ENCODE measurements at regions of chr9 and their contacts with region 1.

Region 1: GRCh38 chr9:83219152-83219923 is 156.4 kb upstream of the RASEF start:
- DNase-seq: peak; percentile 79 to 90 (median 84)
- ATAC-seq: peak; percentile 93 to 97 (median 97)
- H3K4me3 ChIP-seq: peak overlapping the region; percentile 44 to 73 (median 62)
- H3K27ac ChIP-seq: peak overlapping the region; percentile 19 to 82 (median 73)
- H3K4me1 ChIP-seq: peaks cover 0 to 27% (median 18%) of the 10 kb centered on the region in 12 donors
- H3K27me3 ChIP-seq: no peaks in the 10 kb centered on the region
- CTCF ChIP-seq: peak; percentile 47 to 84 (median 68)
- POLR2A ChIP-seq: peak in 1 of 2 donors; percentile 24

Region 2: DNA sequence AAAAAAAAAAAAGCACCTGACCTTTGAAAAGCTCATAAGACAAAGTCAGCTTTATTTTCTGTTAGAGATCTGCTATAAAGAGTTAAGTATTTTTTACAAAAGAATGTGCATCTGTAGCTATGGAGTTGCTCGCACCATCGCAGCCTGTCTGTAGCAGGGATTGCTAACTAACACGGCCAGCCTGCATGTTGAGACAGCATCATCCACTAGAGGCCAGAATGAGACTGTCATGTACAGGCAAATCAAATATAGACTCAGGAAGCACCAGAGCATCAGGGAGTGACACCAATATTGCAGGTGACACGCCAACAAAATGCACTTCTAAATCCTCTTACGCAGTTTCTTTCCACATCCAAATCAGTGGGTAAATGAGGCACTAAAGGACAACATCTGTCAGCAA is 20.1 kb before region 1 on chr9:
- intact Hi-C with region 1: no loop called
- DNase-seq: peak in 4 of 5 donors; percentile 36 to 46 (median 41)
- ATAC-seq: peak; percentile 82 to 97 (median 92)
- H3K4me3 ChIP-seq: no peak overlapping the region
- H3K27ac ChIP-seq: no peak overlapping the region
- H3K4me1 ChIP-seq: peaks cover 0 to 8% (median 0%) of the 10 kb centered on the region in 12 donors
- H3K27me3 ChIP-seq: peaks cover 0 to 9% (median 0%) of the 10 kb centered on the region in 9 donors
- CTCF ChIP-seq: peak; percentile 35 to 80 (median 67)
- POLR2A ChIP-seq: no peak

Region 3: DNA sequence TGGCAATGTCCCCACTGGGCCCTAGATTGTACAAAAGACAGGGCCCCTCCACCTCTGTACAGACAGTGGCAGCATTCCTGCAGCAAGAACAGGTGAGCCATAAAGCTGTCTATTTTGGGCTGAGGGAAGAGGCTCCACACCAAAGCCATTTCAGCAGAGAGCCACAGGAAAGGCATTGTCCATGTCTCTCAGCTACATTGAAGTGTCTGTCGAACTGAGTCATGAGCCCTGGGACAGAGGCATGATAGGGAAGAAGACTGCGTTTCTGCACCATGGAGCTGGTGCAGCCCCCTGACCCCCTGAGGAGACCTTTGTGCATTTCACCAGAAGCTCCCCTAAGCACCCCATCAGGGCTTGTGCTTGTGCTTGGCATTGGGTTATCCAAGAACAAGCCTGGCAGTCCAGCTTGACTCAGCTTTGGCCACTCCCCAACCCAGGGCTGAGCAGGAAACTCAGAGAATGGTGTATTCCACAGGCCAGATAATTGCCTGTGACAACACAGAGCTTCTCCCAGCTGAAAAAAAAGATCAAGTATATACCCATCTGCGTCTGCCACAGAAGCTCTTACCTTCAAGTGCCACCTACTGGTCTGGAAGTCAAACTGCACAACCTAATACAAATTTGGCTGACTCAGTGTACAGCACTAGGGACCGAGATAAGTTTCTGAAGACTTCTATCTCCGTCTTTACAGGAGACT is 324.8 kb after region 1 on chr9:
- intact Hi-C with region 1: loop called in 9 of 10 experiments (anchors 1 to 5 kb)
- DNase-seq: peak in 3 of 5 donors; percentile 35 to 50 (median 43)
- ATAC-seq: peak; percentile 73 to 92 (median 92)
- H3K4me3 ChIP-seq: no peak overlapping the region
- H3K27ac ChIP-seq: peak overlapping the region in 1 of 12 donors; percentile 21
- H3K4me1 ChIP-seq: peaks cover 0 to 12% (median 3%) of the 10 kb centered on the region in 12 donors
- H3K27me3 ChIP-seq: no peaks in the 10 kb centered on the region
- CTCF ChIP-seq: peak; percentile 64 to 86 (median 77)
- POLR2A ChIP-seq: no peak

Region 4: DNA sequence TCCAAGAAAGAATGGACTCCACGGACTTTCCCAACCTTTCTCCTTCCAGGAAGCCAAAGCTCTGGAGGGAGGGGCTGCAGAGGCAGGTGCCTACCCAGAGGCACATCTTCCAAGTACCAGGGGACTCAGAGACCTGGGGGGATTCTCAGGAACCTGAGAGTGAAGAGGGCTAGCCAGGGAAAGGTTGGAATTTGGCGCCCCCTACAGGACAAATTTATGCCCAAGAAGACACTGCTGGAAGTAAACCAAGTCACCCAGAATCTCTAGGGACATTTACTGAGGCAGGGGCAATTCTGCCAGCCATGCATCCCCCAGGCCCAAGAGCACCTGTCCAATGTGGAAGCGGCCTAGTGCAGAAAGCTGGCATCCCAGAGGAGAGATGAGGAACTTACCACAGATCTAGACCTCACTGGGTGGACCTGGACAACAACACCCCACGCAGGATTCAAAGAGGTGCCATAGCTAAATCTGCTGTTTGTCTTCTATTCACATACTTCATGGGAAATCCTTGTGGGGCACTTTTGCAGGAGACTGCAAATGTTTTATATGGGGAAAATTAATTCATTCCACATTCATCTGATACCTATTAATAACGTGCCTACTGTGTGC is 377.7 kb after region 1 on chr9:
- intact Hi-C with region 1: loop called in 2 of 10 experiments (anchors 2 to 5 kb)
- DNase-seq: peak in 2 of 5 donors; percentile 21 to 27
- ATAC-seq: peak in 1 of 4 donors; percentile 49
- H3K4me3 ChIP-seq: no peak overlapping the region
- H3K27ac ChIP-seq: no peak overlapping the region
- H3K4me1 ChIP-seq: no peaks in the 10 kb centered on the region
- H3K27me3 ChIP-seq: no peaks in the 10 kb centered on the region
- CTCF ChIP-seq: peak; percentile 56 to 80 (median 66)
- POLR2A ChIP-seq: no peak

Region 5: DNA sequence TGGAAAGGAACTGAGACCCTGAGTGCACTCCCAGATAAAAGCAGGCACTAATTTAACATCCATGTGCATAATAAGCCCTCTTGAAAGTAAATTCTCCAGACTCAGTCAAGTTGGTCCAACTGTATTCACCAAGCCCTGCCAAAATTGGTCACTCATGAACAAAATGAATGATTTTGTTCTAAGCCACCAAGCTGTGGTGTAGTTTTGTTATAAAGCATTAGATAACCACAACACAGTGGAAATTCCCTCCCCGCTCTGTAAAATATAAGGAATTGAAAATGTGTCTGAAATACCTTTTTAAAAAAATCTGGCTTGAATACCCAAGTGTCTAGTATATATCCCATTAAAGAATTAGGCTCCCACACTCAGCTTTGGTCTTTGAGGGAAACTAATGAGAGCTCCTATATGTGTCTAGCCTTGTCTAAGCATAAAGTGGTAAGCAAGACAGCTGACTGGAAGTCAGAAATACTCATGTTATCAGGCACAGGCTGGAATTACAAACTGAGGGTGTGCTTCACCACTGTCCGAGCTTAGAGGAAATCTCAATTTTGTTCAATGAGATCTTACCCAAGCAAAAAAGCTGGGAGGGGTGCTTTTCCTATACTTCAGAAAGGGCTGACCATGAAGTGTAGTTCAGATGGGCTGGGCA is 436.8 kb after region 1 on chr9:
- intact Hi-C with region 1: loop called in 1 of 10 experiments (anchors 10 kb)
- DNase-seq: no peak
- ATAC-seq: peak in 3 of 4 donors; percentile 46 to 79 (median 49)
- H3K4me3 ChIP-seq: no peak overlapping the region
- H3K27ac ChIP-seq: no peak overlapping the region
- H3K4me1 ChIP-seq: peaks cover 0 to 9% (median 0%) of the 10 kb centered on the region in 12 donors
- H3K27me3 ChIP-seq: no peaks in the 10 kb centered on the region
- CTCF ChIP-seq: no peak
- POLR2A ChIP-seq: no peak